Caco-2 (cell line): ENCODE measurements at regions of chr13 and their contacts with region 1.

Region 1: DNA sequence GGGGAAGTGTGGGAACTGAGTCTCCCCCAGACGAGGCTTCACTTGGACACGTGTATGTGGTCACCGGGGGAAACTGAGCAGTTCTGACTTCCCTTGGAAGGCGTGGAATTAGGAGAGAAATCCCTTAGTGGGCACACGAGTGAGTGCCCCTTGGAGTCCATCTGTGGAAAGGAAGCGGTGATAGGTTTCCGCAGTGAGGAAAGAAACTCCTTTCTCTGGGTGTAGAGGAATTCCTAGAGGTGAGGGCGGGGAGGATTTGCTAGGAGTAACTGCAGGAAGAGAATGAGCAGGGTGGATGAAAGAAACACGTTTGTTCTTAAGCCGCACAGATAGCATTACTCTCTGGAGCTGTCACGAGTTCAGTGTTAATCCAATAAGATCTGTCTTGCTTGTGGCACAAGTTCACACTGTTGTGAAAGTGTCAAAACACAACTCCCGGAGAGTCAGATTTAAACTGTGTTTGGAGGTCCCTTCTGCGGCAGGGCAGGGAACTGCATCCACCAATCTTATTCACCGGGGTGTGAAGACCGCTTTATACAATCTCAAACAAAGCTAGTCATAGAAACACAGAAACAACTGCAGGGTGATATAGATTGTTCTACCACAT is 1.2 kb downstream of the KL start:
- DNase-seq: peak; percentile 56 to 66
- H3K4me3 ChIP-seq: peak overlapping the region; percentile 59
- H3K4me3 Mint-ChIP-seq: peak overlapping the region; percentile 73
- H3K27ac Mint-ChIP-seq: no peak overlapping the region
- H3K4me1 ChIP-seq: no peaks in the 10 kb centered on the region; the same call in 1 of the 2 replicates
- H3K4me1 Mint-ChIP-seq: no peaks in the 10 kb centered on the region
- H3K27me3 ChIP-seq: peaks cover 2% of the 10 kb centered on the region; the same call in 1 of the 2 replicates
- H3K27me3 Mint-ChIP-seq: peaks cover 8% of the 10 kb centered on the region
- CTCF ChIP-seq: peak in 1 of 2 experiments; percentile 63

Region 2: GRCh38 chr13:32650705-32651311 is 366.6 kb before region 1 on chr13:
- CTCF ChIA-PET with region 1: no interaction called
- POLR2A ChIA-PET with region 1: no interaction called
- intact Hi-C with region 1: loop called (anchors 1 kb)
- DNase-seq: peak; percentile 68 to 69
- H3K4me3 ChIP-seq: no peak overlapping the region
- H3K4me3 Mint-ChIP-seq: no peak overlapping the region
- H3K27ac Mint-ChIP-seq: no peak overlapping the region
- H3K4me1 ChIP-seq: no peaks in the 10 kb centered on the region
- H3K4me1 Mint-ChIP-seq: peaks cover 21% of the 10 kb centered on the region
- H3K27me3 ChIP-seq: no peaks in the 10 kb centered on the region
- H3K27me3 Mint-ChIP-seq: no peaks in the 10 kb centered on the region
- CTCF ChIP-seq: peak; percentile 77 to 84

Region 3: GRCh38 chr13:32791545-32792172 is 225.8 kb before region 1 on chr13:
- CTCF ChIA-PET with region 1: no interaction called
- POLR2A ChIA-PET with region 1: no interaction called
- intact Hi-C with region 1: loop called (anchors 5 kb)
- DNase-seq: no peak
- H3K4me3 ChIP-seq: no peak overlapping the region
- H3K4me3 Mint-ChIP-seq: no peak overlapping the region
- H3K27ac Mint-ChIP-seq: no peak overlapping the region
- H3K4me1 ChIP-seq: no peaks in the 10 kb centered on the region
- H3K4me1 Mint-ChIP-seq: peaks cover 9% of the 10 kb centered on the region
- H3K27me3 ChIP-seq: no peaks in the 10 kb centered on the region
- H3K27me3 Mint-ChIP-seq: no peaks in the 10 kb centered on the region
- CTCF ChIP-seq: no peak

Region 4: DNA sequence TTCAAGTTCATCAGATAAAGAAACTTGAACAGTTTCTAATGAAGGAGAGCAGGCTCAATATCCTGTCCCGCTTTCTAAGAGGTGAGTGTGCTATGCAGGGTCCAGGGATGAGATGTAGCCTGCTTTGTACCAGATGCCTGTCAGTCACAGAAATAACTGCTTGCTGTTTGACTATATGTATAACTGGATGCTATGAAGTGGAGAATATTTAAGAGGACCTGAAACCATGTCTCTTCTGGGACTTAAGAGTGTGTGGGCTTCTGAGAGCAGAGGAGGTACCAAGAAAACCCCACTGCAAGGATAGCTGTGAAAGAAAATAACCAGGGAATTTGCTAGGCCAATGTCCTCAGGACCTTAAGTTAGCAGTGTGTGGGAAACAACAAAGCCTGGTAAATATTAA is 554.2 kb after region 1 on chr13:
- CTCF ChIA-PET with region 1: no interaction called
- POLR2A ChIA-PET with region 1: no interaction called
- intact Hi-C with region 1: no loop called
- DNase-seq: no peak
- H3K4me3 ChIP-seq: no peak overlapping the region
- H3K4me3 Mint-ChIP-seq: no peak overlapping the region
- H3K27ac Mint-ChIP-seq: no peak overlapping the region
- H3K4me1 ChIP-seq: no peaks in the 10 kb centered on the region
- H3K4me1 Mint-ChIP-seq: no peaks in the 10 kb centered on the region
- H3K27me3 ChIP-seq: no peaks in the 10 kb centered on the region
- H3K27me3 Mint-ChIP-seq: peaks cover 6% of the 10 kb centered on the region
- CTCF ChIP-seq: no peak